ENCODE measurements at regions of chr3 and their contacts with region 1.

Region 1: DNA sequence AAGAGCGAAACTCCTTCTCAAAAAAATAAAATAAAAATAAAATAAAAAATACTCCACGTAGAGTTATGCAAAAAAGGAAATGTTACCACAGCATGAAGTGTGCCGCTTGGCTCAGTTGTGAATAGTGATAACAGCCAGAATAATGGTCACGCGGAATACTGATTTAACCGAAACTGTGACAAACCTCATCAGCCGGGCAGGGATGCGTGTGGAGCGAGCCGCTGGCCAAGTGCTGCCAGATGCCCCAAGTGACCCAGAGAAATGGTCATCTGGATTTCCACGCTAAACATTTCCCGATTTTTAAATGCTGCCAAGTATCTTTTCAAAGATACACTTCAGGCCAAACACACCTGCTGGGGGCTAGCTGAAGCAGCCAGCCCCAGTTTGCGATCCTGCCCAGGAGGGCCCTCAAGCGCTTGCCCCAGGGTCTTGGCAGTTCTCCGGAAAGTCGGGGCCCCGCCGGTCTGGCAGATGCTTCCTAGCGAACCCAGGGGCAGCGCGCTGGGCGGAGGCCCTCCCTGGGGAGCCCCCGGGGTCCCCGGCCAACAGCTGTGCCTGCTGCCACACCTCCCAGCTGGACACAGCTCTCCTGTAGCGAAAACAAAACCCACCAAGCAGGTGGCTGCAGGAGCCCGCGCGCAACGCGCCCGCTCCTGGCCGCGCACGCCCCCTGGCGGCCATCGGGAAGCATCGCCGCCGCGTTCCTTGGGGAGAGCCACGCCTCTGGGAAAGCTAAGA is 35.1 kb downstream of the CMTM6 start:
- DNase-seq: peak; percentile 76 to 83
- H3K4me3 ChIP-seq: peak overlapping the region in 1 of 3 donors; percentile 31
- H3K27ac ChIP-seq: peak overlapping the region; percentile 34 to 58 (median 40)
- H3K4me1 ChIP-seq: peaks cover 9 to 19% of the 10 kb centered on the region in 2 donors
- H3K27me3 ChIP-seq: no peaks in the 10 kb centered on the region
- CTCF ChIP-seq: peak; percentile 87 to 99 (median 96)
- POLR2A ChIP-seq: no peak

Region 2: GRCh38 chr3:32194653-32195052 is 272.8 kb before region 1 on chr3:
- intact Hi-C with region 1: no loop called
- DNase-seq: no peak
- H3K4me3 ChIP-seq: no peak overlapping the region
- H3K27ac ChIP-seq: no peak overlapping the region
- H3K4me1 ChIP-seq: no peaks in the 10 kb centered on the region
- H3K27me3 ChIP-seq: no peaks in the 10 kb centered on the region
- CTCF ChIP-seq: no peak
- POLR2A ChIP-seq: no peak

Region 3: DNA sequence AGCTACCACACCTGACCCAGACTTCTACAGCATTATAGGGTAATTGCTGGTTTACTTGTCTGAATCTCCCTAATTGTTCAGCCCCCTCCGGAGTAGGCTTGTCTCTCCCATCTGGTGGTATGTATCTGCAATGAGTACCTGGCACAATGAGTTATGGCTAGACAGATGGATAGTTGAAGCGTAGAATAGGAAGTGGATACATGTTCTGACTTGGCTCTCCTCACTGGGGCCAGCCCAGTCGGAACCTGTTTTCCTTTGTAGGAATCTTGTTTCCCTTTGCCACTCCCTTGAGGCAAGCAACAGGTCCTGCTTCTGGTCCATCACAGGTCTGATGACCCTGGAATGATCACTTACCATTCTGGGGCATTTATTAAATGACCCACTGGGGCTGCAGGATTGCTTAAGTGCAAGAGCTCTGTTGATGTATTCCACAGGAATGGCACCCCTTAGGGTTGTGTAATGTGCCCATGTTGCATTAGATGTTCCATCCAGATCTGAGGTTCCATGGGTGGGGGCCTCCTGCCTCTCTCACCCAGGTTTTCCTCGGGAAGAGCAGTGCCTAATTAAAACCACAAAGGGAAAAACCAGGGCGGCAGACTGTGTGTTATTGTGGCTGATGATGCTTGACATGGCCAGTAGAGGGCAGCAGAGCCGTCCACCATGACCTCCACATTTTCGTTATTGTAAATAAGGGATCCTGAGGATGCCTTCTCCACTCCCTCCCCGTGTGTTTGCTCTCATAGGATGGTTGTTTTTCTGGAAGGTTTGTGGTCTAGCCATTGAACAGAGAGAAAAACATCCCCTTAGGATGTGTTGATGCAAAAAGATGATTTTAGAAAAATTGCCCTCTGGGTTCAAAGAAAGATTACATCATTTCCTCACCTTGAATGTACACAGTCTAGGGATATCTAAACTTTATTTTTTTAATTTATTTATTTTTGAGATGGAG is 171.0 kb before region 1 on chr3:
- intact Hi-C with region 1: loop called (anchors 10 kb)
- DNase-seq: peak; percentile 63 to 72
- H3K4me3 ChIP-seq: no peak overlapping the region
- H3K27ac ChIP-seq: no peak overlapping the region
- H3K4me1 ChIP-seq: peaks cover 7 to 20% of the 10 kb centered on the region in 2 donors
- H3K27me3 ChIP-seq: no peaks in the 10 kb centered on the region
- CTCF ChIP-seq: peak; percentile 79 to 90 (median 86)
- POLR2A ChIP-seq: no peak

Region 4: GRCh38 chr3:32374788-32375595 is 92.5 kb before region 1 on chr3:
- intact Hi-C with region 1: loop called (anchors 5 kb)
- DNase-seq: peak; percentile 61 to 63
- H3K4me3 ChIP-seq: no peak overlapping the region
- H3K27ac ChIP-seq: no peak overlapping the region
- H3K4me1 ChIP-seq: peaks cover 8 to 15% of the 10 kb centered on the region in 2 donors
- H3K27me3 ChIP-seq: no peaks in the 10 kb centered on the region
- CTCF ChIP-seq: peak in 5 of 6 experiments; percentile 29 to 84 (median 67)
- POLR2A ChIP-seq: no peak

Measured in thyroid gland (tissue), 4 donors.